ENCODE measurements at regions of chr13 and their contacts with region 1.

Region 1: DNA sequence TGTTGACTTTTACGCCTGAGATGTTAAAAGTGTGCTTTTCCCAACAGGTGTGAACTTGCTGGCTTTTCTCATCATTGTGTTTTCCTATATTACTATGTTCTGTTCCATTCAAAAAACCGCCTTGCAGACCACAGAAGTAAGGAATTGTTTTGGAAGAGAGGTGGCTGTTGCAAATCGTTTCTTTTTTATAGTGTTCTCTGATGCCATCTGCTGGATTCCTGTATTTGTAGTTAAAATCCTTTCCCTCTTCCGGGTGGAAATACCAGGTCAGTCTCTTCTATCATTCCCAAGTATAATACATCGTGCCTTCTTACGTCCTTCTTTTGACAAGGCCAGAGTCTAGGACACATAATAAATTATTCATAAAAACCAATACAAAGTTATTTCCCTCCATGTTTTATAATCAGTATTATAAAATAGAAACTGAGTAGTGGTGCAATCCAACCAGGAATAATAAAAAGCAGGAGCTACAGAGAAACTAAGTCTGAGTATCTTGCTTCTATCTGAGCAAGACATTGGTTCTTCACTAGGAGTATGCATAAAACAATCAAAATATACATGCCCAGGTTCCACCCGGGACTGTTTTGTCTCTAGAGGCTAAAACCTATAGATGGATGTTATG is 57.9 kb downstream of the RXFP2 start:
- DNase-seq: no peak
- ATAC-seq: peak; percentile 19 to 33

Region 2: GRCh38 chr13:31090991-31091531 is 706.2 kb before region 1 on chr13:
- intact Hi-C with region 1: no loop called
- DNase-seq: peak; percentile 31
- ATAC-seq: no peak

Region 3: GRCh38 chr13:31431722-31432137 is 365.5 kb before region 1 on chr13:
- intact Hi-C with region 1: loop called in 1 of 2 experiments (anchors 5 kb)
- DNase-seq: peak; percentile 48
- ATAC-seq: peak; percentile 47 to 61

Region 4: DNA sequence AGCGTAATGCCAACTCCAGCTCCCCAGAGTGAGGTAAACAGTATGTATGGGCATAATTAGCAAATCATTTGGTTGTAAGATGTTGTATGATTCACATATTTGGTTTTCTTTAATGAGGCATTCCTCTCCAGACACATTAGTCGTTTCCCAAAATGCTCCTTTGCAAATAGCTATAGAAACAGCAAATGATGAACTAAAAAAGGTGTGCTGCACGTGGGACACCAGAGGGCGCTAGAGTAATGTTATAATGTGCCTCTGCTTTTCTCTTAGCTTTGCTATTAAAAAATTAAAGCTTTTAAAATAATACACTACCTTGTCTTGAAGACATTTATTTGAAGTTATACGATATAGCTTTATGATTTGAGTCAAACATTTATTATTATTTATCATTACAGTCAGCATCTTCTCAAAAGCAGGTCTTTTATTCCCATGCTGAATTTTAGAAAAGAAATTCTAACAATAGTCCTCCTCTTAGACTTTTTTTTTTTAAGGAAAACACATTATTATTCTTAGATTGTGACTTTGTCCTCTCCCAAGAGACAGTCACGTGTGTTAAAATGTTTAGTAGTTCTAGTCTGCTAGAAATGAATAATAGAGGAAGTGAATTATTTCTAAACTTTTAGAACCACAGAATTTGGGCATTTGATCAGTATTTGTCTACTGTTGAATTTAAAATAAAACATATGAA is 112.7 kb after region 1 on chr13:
- intact Hi-C with region 1: no loop called
- DNase-seq: no peak
- ATAC-seq: peak; percentile 60 to 63